ENCODE measurements at regions of chr6 and their contacts with region 1.

Region 1: DNA sequence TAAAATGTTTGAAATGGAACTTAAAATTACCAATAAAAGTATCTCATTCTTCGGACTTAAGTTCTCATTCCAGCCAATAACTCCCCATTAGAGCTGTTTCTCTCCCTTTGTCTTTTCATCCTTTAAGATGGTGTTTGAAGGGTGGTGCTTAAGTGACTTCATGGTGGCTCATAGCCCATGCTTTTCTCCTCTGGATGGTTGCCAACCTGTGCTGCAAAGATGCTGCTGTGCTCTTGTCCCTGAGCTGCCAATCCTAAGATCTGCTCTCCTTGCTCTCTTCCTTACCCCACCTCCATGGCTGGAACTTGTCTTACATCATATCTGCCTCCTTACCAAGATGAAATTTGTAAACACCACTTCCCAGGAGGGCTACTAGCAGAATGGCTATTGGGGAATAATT is 31.6 kb upstream of the PNRC1 start:
- DNase-seq: no peak
- H3K4me3 ChIP-seq: no peak overlapping the region
- H3K27ac ChIP-seq: no peak overlapping the region
- H3K4me1 ChIP-seq: peaks cover 25% of the 10 kb centered on the region
- H3K27me3 ChIP-seq: no peaks in the 10 kb centered on the region
- CTCF ChIP-seq: no peak
- POLR2A ChIP-seq: no peak

Region 2: GRCh38 chr6:88963139-88964090 is 85.6 kb before region 1 on chr6 and contains the start of gene RNGTT:
- intact Hi-C with region 1: no loop called
- DNase-seq: peak in 1 of 2 donors; percentile 98
- H3K4me3 ChIP-seq: peak within 1 kb of the TSS; percentile 65 to 92
- H3K27ac ChIP-seq: peak within 1 kb of the TSS; percentile 81
- H3K4me1 ChIP-seq: peaks cover 23% of the 10 kb centered on the region
- H3K27me3 ChIP-seq: no peaks in the 10 kb centered on the region
- CTCF ChIP-seq: no peak
- POLR2A ChIP-seq: peak in 1 of 2 donors; percentile 19
- total RNA-seq, gene RNGTT: 18.2 TPM

Region 3: DNA sequence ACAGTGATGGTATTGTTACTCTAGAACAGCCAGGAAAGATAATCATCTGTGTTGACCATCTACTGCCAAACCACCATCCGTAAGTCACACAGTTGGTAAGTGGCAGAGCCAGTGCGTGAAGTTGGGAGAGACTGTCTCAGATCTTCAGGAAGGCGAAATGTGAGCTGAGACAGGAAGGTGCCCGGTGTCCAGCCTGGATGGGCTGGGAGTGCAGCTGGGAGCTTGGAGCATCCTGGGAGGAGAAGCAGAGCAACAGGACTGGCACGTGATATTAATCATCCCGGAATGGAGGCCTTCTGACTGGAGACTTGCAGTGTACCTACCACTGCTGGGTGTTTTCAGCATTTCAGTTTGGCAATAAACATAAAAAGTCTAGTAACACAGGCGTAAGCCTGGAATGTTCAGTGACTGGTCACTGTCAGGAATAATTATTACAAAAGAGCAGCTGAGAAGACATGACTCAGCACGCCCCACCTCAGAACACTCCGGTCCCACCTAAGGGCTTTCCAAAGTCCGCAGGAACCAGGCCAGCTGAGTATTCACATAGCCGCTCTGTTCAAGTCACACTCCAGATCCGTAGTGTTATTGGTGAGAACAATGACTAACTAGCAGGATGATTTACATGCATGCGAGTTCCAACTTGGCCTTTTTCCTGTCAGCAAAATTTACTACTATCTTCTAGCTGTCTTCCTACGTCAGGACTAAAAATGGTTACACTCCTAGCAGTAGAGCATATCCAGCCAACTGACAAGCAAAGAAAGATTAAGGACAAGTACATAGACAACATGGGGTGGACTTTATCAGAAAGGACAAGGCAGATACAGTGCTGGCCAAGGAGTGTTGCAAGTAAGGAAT is 13.5 kb before region 1 on chr6:
- intact Hi-C with region 1: loop called (anchors 2 kb)
- DNase-seq: peak in 1 of 2 donors; percentile 100
- H3K4me3 ChIP-seq: peak overlapping the region; percentile 6 to 7
- H3K27ac ChIP-seq: peak overlapping the region; percentile 91
- H3K4me1 ChIP-seq: peaks cover 30% of the 10 kb centered on the region
- H3K27me3 ChIP-seq: no peaks in the 10 kb centered on the region
- CTCF ChIP-seq: no peak
- POLR2A ChIP-seq: no peak

Measured in vagina (tissue), 2 donors.